ENCODE measurements at regions of chr12 and their contacts with region 1.

Region 1: GRCh38 chr12:107372229-107372658 is 278.9 kb upstream of the CRY1 start:
- DNase-seq: peak; percentile 54
- H3K4me3 Mint-ChIP-seq: no peak overlapping the region
- H3K27ac Mint-ChIP-seq: peak overlapping the region; percentile 89
- H3K4me1 Mint-ChIP-seq: peaks cover 70% of the 10 kb centered on the region
- H3K27me3 Mint-ChIP-seq: no peaks in the 10 kb centered on the region

Region 2: DNA sequence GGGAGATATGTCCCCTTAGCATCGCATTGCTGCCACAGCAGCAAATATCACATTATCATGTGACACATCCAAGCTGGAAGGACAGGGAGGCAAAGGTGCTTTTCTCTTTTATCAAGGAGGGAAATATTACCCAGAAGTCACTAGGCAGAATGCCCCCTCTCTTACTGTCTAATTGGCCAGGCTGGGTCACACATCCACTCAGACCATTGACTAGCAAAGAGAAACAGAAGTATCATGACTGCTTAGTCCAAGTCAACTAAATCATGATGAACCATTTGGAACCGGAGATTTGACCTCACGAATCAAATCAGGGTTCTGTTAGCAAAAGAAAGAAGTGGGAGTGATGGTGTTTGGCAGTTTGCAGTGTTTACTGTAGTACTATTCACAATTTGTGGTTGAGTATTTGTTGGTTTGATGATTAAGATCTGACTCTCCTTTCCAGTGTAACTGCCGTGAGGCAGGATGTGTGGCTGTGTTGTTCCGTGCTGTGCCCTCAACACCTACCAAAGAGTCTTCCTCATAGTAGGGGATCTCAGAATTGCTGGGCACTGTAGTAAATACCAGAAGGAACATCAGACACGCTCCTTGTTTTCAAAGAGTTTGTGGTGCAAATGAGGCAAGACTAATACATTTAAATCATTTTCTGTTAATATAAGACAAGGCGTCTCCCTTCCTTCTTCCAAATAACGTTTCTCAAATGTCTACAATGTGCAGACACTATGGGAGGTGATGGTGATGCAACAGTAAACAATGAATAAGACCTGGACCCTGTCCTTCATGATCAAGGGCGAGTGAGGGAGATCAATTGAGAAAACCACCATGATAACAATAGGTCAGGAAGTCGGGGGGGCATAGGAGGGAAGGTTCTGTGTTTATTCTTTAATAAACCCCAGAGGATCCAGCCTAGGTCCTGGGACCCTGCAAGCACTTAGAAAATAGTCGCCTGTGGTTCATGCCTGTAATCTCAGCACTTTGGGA is 84.5 kb before region 1 on chr12:
- CTCF ChIA-PET with region 1: no interaction called
- POLR2A ChIA-PET with region 1: no interaction called
- intact Hi-C with region 1: loop called (anchors 1 kb)
- DNase-seq: peak; percentile 75
- H3K4me3 Mint-ChIP-seq: no peak overlapping the region
- H3K27ac Mint-ChIP-seq: peak overlapping the region; percentile 54
- H3K4me1 Mint-ChIP-seq: peaks cover 16% of the 10 kb centered on the region
- H3K27me3 Mint-ChIP-seq: no peaks in the 10 kb centered on the region

Region 3: DNA sequence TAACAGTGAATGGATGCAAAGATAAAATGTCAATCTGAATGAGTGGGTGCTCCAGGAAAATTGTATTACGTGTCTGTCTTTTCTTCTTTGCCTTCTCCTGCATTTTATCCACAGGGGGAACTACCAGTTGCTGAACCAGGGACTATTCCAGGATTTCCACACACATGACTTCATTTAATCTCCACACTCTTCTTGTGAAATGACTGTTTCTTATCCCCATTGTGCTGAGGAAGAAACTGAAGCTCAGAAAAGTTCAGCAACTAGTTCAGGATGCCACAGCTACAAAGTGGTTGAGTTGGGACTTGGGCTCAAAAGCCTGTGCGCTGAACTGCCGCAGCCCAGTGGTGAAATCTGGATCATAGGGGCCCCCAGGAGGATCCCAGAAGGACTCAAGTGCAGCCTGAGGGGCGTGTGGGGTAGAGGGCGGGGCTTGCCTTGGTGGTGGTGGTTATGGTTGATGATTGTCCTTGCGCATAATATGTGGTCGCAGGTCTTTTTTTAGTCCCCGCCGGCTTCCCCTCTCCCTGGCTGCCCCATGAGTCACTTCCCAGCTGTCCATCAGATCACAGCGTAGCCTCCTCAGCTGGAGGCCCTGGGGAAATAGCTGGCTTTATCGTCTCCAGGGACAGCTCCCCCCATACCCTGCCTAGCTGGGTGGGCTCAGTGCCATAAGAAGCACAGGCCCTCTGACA is 43.7 kb before region 1 on chr12:
- CTCF ChIA-PET with region 1: no interaction called
- POLR2A ChIA-PET with region 1: interaction called, 4 read pairs
- intact Hi-C with region 1: loop called (anchors 1 kb)
- DNase-seq: peak; percentile 51
- H3K4me3 Mint-ChIP-seq: no peak overlapping the region
- H3K27ac Mint-ChIP-seq: no peak overlapping the region
- H3K4me1 Mint-ChIP-seq: peaks cover 63% of the 10 kb centered on the region
- H3K27me3 Mint-ChIP-seq: no peaks in the 10 kb centered on the region

Region 4: GRCh38 chr12:107356266-107356936 is 15.8 kb before region 1 on chr12:
- CTCF ChIA-PET with region 1: no interaction called
- POLR2A ChIA-PET with region 1: interaction called, 3 read pairs
- intact Hi-C with region 1: loop called (anchors 1 kb)
- DNase-seq: no peak
- H3K4me3 Mint-ChIP-seq: no peak overlapping the region
- H3K27ac Mint-ChIP-seq: no peak overlapping the region
- H3K4me1 Mint-ChIP-seq: peaks cover 34% of the 10 kb centered on the region
- H3K27me3 Mint-ChIP-seq: no peaks in the 10 kb centered on the region

Region 5: DNA sequence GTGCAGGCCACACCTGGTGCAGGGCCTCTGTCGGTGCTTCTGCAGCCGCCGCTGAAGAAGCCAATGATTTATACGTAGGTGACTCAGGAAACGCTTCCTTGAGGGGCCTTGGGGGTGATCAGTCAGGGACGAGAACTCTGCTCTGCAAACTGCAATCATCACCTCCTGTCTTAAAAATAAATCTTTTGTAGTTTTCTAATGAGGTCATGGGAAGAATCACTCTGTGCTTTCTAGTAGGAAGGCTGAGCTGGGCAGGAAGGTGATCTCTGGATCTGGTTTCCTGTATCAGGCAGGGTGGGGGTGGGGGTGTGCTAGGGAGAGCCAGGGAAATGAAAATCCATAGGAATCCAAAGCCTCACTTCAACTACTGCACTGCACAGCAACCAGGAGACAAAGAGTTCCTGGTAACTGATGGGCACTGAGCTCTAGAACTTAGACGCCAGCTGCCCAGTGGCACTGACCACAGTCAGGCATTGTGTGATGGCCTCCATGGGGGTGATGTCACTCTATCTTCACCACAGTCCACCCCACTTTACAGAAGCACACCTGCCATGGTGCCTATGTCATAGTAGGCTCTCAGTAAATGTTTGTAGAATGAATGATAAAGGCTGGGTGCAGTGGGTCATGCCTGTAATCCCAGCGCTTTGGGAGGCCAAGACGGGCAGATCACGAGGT is 20.9 kb after region 1 on chr12:
- CTCF ChIA-PET with region 1: no interaction called
- POLR2A ChIA-PET with region 1: no interaction called
- intact Hi-C with region 1: loop called (anchors 2 kb)
- DNase-seq: peak; percentile 27
- H3K4me3 Mint-ChIP-seq: no peak overlapping the region
- H3K27ac Mint-ChIP-seq: no peak overlapping the region
- H3K4me1 Mint-ChIP-seq: peaks cover 51% of the 10 kb centered on the region
- H3K27me3 Mint-ChIP-seq: no peaks in the 10 kb centered on the region

Region 6: DNA sequence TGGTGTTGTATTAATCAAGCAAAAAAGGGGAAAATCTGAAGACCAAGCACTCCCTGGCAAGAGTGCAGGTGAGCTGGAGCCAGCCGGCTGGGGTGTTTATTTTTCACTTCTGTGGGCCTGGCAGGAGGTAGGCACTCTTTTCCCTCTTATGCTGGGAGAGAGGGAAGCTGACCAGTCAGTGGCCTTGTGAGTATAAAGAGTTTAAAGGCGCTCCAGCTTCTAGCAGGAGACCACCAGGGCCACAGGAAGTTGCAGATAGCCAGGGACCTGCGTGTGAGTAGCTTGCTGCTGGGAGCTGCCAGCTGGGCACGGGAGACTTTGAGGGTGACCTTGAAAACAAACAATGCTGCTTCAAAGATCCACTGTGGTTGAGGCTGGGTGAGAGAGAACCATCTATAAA is 95.9 kb after region 1 on chr12:
- CTCF ChIA-PET with region 1: no interaction called
- POLR2A ChIA-PET with region 1: no interaction called
- intact Hi-C with region 1: no loop called
- DNase-seq: no peak
- H3K4me3 Mint-ChIP-seq: no peak overlapping the region
- H3K27ac Mint-ChIP-seq: no peak overlapping the region
- H3K4me1 Mint-ChIP-seq: peaks cover 5% of the 10 kb centered on the region
- H3K27me3 Mint-ChIP-seq: no peaks in the 10 kb centered on the region